Esophagus muscularis mucosa (tissue), 4 donors: ENCODE measurements at regions of chr1 and their contacts with region 1.

Region 1: DNA sequence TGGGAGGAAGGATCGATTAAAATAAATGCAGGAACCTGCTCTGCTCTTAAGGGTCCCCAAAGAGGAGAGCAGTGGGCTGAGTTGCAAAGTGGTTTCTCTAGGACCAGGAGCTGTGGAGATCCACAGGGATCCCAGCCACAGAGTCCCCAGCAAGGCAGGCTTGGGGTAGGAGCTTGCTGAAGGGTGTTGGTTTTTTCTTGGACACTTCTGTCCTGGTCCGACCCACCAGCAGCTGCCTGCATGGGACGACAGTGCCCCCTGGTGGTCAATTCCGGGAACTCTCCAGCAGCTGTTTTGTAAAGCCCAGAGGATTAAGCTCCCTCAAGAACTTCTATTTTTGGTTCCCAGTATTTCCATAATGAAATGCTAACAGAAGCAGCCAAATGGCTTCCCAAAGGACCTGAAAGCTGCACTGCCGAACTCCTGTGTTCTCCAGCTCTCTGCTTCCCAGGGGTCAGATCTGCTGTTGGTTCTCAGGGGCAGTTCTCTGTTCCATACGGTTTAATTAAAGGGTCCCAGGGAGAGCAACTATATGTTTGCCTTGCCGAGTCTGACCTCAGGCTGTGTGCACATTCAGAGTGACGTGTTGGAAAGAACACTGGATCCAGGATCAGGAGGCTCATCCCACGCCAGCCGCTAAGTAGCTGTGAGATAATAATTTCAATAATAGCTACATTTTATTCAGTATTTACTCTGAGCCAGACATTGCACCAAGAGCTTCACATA is 23.2 kb downstream of the NENF start:
- DNase-seq: peak; percentile 97
- H3K4me3 ChIP-seq: peak overlapping the region in 1 of 4 donors; percentile 8
- H3K27ac ChIP-seq: peak overlapping the region; percentile 56 to 75 (median 68)
- H3K4me1 ChIP-seq: peaks cover 27 to 39% (median 37%) of the 10 kb centered on the region in 4 donors
- H3K27me3 ChIP-seq: no peaks in the 10 kb centered on the region
- CTCF ChIP-seq: peak in 2 of 3 experiments; percentile 98 to 99
- EP300 ChIP-seq: no peak
- POLR2A ChIP-seq: no peak

Region 2: GRCh38 chr1:212070720-212071302 is 385.2 kb before region 1 on chr1:
- intact Hi-C with region 1: loop called (anchors 2 kb)
- DNase-seq: no peak
- H3K4me3 ChIP-seq: no peak overlapping the region
- H3K27ac ChIP-seq: no peak overlapping the region
- H3K4me1 ChIP-seq: no peaks in the 10 kb centered on the region
- H3K27me3 ChIP-seq: no peaks in the 10 kb centered on the region
- CTCF ChIP-seq: peak; percentile 82 to 84 (median 83)
- EP300 ChIP-seq: no peak
- POLR2A ChIP-seq: no peak

Region 3: DNA sequence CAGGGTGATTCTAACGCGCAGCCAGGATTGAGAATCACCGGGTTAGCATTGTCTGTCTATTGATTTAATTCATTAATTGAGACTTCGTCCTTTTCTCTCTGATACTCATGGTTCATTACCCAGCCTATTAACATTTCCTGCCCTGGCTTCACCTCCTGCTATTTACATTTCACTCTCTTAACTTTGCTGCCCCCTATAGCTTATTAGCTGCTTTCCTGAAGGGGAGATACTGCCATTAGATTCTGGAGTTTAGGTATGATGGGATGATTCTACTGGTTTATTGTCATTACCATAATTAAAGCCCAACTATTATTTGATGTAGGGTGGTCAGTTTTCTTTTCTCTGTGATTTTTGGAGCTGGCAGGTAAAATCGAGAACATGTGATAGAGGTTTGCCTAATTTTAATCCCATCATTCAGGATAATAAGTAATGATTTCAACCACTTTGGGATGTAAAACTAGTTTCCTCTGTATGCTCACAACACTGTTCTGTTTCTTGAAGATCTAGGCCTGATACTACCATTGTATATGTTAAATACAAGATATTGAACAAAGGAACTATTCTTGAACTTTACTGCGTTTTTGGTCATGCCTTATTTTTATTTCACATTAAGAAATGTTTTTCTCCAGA is 164.3 kb before region 1 on chr1:
- intact Hi-C with region 1: loop called (anchors 5 kb)
- DNase-seq: no peak
- H3K4me3 ChIP-seq: peak overlapping the region in 2 of 4 donors; percentile 1 to 7
- H3K27ac ChIP-seq: peak overlapping the region in 1 of 4 donors; percentile 16
- H3K4me1 ChIP-seq: peaks cover 77 to 93% (median 81%) of the 10 kb centered on the region in 4 donors
- H3K27me3 ChIP-seq: no peaks in the 10 kb centered on the region
- CTCF ChIP-seq: peak; percentile 53 to 57 (median 56)
- EP300 ChIP-seq: no peak
- POLR2A ChIP-seq: no peak

Region 4: DNA sequence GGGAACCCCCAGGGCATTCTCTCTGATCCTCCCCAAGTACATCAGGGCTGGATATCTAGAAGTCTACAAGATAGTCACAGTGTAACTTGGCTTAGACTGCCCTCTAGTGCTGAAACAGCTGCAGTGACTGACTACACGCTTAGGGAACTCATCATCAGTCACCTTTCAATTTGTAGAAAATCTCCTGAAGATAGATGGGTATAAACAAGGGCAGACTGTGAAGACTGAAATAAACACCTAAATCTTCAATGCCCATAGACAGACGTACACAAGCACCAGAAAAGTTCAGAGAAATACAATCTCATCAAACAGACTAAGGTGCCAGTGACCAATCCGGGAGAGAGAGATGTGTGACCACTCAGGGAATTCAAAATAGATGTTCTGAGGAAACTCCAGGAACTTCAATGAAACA is 87.9 kb before region 1 on chr1:
- intact Hi-C with region 1: loop called (anchors 5 kb)
- DNase-seq: no peak
- H3K4me3 ChIP-seq: no peak overlapping the region
- H3K27ac ChIP-seq: no peak overlapping the region
- H3K4me1 ChIP-seq: peaks cover 8 to 38% (median 33%) of the 10 kb centered on the region in 4 donors
- H3K27me3 ChIP-seq: no peaks in the 10 kb centered on the region
- CTCF ChIP-seq: peak; percentile 77 to 95 (median 82)
- EP300 ChIP-seq: no peak
- POLR2A ChIP-seq: no peak

Region 5: DNA sequence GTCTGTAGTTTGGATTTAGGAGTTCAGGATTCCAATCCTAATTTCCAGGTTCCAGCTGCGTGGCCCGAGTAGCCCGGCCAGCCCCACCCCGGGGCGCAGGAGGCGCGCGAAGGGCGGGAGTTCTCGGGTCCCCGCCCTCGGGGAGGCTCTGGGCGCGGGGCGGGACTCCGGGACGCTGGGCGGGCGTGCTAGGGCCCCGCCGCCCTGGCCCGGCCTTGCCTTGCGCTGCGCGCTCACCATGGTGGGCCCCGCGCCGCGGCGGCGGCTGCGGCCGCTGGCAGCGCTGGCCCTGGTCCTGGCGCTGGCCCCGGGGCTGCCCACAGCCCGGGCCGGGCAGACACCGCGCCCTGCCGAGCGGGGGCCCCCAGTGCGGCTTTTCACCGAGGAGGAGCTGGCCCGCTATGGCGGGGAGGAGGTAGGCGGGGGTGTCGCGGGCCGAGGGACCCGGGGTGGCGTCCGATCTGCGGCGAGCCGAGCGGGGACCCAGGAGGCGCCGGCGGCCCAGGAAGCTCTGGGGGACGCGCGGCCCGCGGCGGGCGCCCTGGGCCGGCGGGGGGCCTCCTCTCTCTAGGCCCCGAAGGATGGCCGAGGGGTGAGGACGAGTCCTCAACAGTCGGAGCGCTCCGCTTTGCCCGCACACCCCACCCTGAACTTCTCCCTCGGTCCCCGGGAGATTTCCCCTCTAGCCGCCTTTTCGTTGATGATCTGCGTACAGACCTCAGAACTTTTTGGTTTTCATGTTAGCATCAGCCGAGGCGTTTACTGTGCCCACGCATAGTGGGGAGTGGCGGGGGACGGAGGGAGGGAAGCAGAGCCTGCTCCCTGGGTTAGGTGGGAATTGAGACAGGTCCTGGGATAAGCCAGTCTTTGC is 23.0 kb before region 1 on chr1 and contains the start of gene NENF:
- intact Hi-C with region 1: no loop called
- DNase-seq: no peak
- H3K4me3 ChIP-seq: peak within 1 kb of the TSS; percentile 83 to 99 (median 90)
- H3K27ac ChIP-seq: peak within 1 kb of the TSS; percentile 91 to 96 (median 92)
- H3K4me1 ChIP-seq: peaks cover 11 to 30% (median 21%) of the 10 kb centered on the region in 4 donors
- H3K27me3 ChIP-seq: no peaks in the 10 kb centered on the region
- CTCF ChIP-seq: no peak
- EP300 ChIP-seq: no peak
- POLR2A ChIP-seq: no peak
- total RNA-seq, gene NENF: 67.9 to 99.3 (median 91.7) TPM

Region 6: GRCh38 chr1:212545941-212546635 is 90.1 kb after region 1 on chr1:
- intact Hi-C with region 1: no loop called
- DNase-seq: peak; percentile 86
- H3K4me3 ChIP-seq: no peak overlapping the region
- H3K27ac ChIP-seq: peak overlapping the region; percentile 36 to 71 (median 64)
- H3K4me1 ChIP-seq: peaks cover 0 to 8% (median 0%) of the 10 kb centered on the region in 4 donors
- H3K27me3 ChIP-seq: no peaks in the 10 kb centered on the region
- CTCF ChIP-seq: no peak
- EP300 ChIP-seq: no peak
- POLR2A ChIP-seq: no peak